ENCODE measurements at regions of chr16 and their contacts with region 1.

Region 1: GRCh38 chr16:14249291-14250032 is 178.3 kb downstream of the MRTFB start:
- DNase-seq: no peak
- H3K4me3 ChIP-seq: no peak overlapping the region
- H3K27ac ChIP-seq: no peak overlapping the region
- H3K4me1 ChIP-seq: no peaks in the 10 kb centered on the region
- H3K27me3 ChIP-seq: no peaks in the 10 kb centered on the region
- CTCF ChIP-seq: peak; percentile 87

Region 2: DNA sequence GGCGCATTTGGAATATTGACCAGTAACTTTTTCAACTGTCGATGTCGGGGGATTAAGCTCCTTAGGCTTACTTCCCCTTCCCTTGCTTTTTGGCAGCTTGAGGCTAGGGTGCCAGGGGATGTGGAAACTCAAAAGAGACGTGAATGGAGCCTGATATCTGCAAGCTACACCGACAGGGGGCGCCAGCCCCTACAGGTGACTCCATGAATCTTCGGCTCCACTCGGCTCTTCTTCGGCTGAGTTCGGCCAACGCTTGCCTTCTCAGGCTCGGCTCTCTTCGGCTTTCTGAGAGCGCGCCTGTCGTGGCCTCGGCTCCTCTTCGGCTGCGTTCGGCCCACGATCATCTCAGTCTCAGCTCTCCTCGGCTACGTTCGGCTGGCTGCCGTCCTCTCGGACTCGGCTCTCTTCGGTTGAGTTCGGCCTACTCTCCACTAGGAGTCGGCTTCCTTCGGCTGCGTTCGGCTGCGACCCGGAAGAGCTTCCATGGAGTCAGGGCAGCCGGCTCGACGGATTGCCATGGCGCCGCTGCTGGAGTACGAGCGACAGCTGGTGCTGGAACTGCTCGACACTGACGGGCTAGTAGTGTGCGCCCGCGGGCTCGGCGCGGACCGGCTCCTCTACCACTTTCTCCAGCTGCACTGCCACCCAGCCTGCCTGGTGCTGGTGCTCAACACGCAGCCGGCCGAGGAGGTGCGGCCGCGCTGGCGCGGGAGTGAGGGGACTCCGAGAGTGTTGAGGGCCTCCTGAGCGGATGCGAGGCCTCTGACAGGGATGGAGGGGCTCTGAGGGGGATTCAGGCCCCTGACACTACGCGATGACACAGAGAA is 329.6 kb before region 1 on chr16 and contains the start of gene ERCC4:
- intact Hi-C with region 1: loop called (anchors 10 kb)
- DNase-seq: peak; percentile 100
- H3K4me3 ChIP-seq: peak within 1 kb of the TSS; percentile 89
- H3K27ac ChIP-seq: peak within 1 kb of the TSS; percentile 87
- H3K4me1 ChIP-seq: peaks cover 44% of the 10 kb centered on the region
- H3K27me3 ChIP-seq: no peaks in the 10 kb centered on the region
- CTCF ChIP-seq: no peak
- total RNA-seq, gene ERCC4: 8.2 TPM

Region 3: GRCh38 chr16:14324581-14324980 is 75.1 kb after region 1 on chr16:
- intact Hi-C with region 1: no loop called
- DNase-seq: no peak
- H3K4me3 ChIP-seq: no peak overlapping the region
- H3K27ac ChIP-seq: peak overlapping the region; percentile 64
- H3K4me1 ChIP-seq: peaks cover 44% of the 10 kb centered on the region
- H3K27me3 ChIP-seq: no peaks in the 10 kb centered on the region
- CTCF ChIP-seq: no peak

Region 4: GRCh38 chr16:14485121-14485551 is 235.7 kb after region 1 on chr16:
- intact Hi-C with region 1: no loop called
- DNase-seq: no peak
- H3K4me3 ChIP-seq: no peak overlapping the region
- H3K27ac ChIP-seq: no peak overlapping the region
- H3K4me1 ChIP-seq: peaks cover 42% of the 10 kb centered on the region
- H3K27me3 ChIP-seq: no peaks in the 10 kb centered on the region
- CTCF ChIP-seq: no peak

Measured in left ventricle myocardium inferior (tissue), 1 donor.